Posterior cingulate gyrus (tissue), 11 donors: ENCODE measurements at regions of chr14 and their contacts with region 1.

Region 1: DNA sequence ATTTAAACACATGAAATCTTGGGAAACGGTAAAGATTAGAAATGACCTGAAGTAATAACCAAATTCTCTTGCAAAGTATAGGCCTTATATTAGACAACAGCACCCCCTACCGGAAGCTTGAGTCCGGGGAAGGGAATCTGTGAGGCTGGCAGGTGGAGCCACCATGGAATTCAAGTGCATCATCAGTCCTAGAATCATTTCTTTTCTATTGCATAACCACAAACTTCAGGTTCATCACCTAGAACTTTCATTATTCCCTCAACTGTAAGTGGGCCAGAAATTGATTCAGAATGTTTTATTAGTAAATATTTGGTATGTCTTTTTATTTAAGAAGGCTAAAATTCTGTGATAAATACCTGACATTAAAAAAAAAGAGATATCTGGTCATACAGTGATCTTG is 48.5 kb downstream of the AP5M1 start:
- DNase-seq: peak in 9 of 10 donors; percentile 32 to 89 (median 70)

Region 2: GRCh38 chr14:56491299-56492285 is 825.7 kb before region 1 on chr14:
- intact Hi-C with region 1: loop called (anchors 1 kb)
- DNase-seq: peak in 3 of 10 donors; percentile 11 to 24 (median 14)

Region 3: GRCh38 chr14:56555921-56556570 is 761.3 kb before region 1 on chr14:
- intact Hi-C with region 1: loop called (anchors 2 kb)
- DNase-seq: no peak

Region 4: GRCh38 chr14:56659964-56660551 is 657.3 kb before region 1 on chr14:
- intact Hi-C with region 1: loop called (anchors 2 kb)
- DNase-seq: no peak

Region 5: DNA sequence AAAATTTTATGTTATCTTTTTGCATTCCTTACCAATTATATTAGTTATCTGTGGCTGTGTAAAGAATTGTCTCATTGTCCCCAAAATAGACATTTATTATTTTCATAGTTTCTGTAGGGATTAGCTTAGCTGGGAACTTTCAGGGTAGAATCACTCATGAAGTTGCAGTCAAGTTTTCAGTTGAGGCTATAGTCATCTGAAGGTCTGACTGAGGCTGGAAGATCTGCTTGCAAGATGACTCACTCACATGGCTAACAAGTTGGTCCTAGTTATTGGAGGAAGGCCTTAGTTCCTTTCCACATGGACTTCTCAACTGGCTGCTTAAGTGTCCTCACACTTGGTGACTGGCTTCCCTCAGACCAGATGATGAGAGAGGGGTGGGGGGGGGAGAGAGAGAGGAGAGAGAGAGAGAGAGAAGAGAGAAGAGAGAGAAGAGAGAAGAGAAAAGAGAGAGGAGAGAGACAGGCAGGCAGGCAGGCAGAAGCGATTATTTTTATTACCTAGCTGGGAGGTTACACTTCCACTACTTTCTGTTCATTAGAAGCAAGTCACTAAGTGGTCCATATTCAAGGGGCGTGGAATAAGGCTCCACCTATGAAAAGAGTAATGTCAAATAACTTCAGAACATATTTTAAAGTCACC is 42.2 kb before region 1 on chr14:
- intact Hi-C with region 1: no loop called
- DNase-seq: no peak